CD8-positive, alpha-beta memory T cell (primary cell): ENCODE measurements at regions of chr20 and their contacts with region 1.

Region 1: GRCh38 chr20:41136680-41137613 is at the start of gene PLCG1:
- DNase-seq: peak; percentile 80 to 86 (median 83)
- H3K4me3 ChIP-seq: peak within 1 kb of the TSS; percentile 85
- H3K4me3 Mint-ChIP-seq: peak within 1 kb of the TSS; percentile 89 to 98 (median 94)
- H3K27ac ChIP-seq: peak within 1 kb of the TSS; percentile 80
- H3K27ac Mint-ChIP-seq: peak within 1 kb of the TSS; percentile 92 to 99 (median 96)
- H3K4me1 ChIP-seq: peaks cover 63% of the 10 kb centered on the region
- H3K4me1 Mint-ChIP-seq: peaks cover 57 to 66% (median 63%) of the 10 kb centered on the region in 3 donors
- H3K27me3 ChIP-seq: no peaks in the 10 kb centered on the region
- H3K27me3 Mint-ChIP-seq: peaks cover 0 to 4% of the 10 kb centered on the region in 2 donors
- total RNA-seq, gene PLCG1: 104 to 108 TPM

Region 2: GRCh38 chr20:41072190-41072863 is 64.6 kb before region 1 on chr20:
- CTCF ChIA-PET with region 1: no interaction called
- POLR2A ChIA-PET with region 1: no interaction called
- DNase-seq: no peak
- H3K4me3 ChIP-seq: no peak overlapping the region
- H3K4me3 Mint-ChIP-seq: peak overlapping the region in 1 of 7 donors; percentile 3
- H3K27ac ChIP-seq: no peak overlapping the region
- H3K27ac Mint-ChIP-seq: peak overlapping the region in 5 of 8 donors; percentile 20 to 87 (median 51)
- H3K4me1 ChIP-seq: peaks cover 67% of the 10 kb centered on the region
- H3K4me1 Mint-ChIP-seq: peaks cover 62 to 92% (median 89%) of the 10 kb centered on the region in 3 donors
- H3K27me3 ChIP-seq: no peaks in the 10 kb centered on the region
- H3K27me3 Mint-ChIP-seq: no peaks in the 10 kb centered on the region

Region 3: GRCh38 chr20:41149679-41150131 is 12.8 kb after region 1 on chr20:
- CTCF ChIA-PET with region 1: interaction called, 193 read pairs
- POLR2A ChIA-PET with region 1: interaction called, 69 read pairs
- DNase-seq: no peak
- H3K4me3 ChIP-seq: no peak overlapping the region
- H3K4me3 Mint-ChIP-seq: peak overlapping the region in 6 of 7 donors; percentile 1 to 94 (median 65)
- H3K27ac ChIP-seq: no peak overlapping the region
- H3K27ac Mint-ChIP-seq: peak overlapping the region; percentile 44 to 99 (median 92)
- H3K4me1 ChIP-seq: peaks cover 100% of the 10 kb centered on the region
- H3K4me1 Mint-ChIP-seq: peaks cover 92 to 99% (median 97%) of the 10 kb centered on the region in 3 donors
- H3K27me3 ChIP-seq: no peaks in the 10 kb centered on the region
- H3K27me3 Mint-ChIP-seq: peaks cover 0 to 1% of the 10 kb centered on the region in 2 donors

Region 4: GRCh38 chr20:41222296-41222695 is 85.3 kb after region 1 on chr20:
- CTCF ChIA-PET with region 1: interaction called, 14 read pairs
- POLR2A ChIA-PET with region 1: no interaction called
- DNase-seq: no peak
- H3K4me3 ChIP-seq: no peak overlapping the region
- H3K4me3 Mint-ChIP-seq: no peak overlapping the region
- H3K27ac ChIP-seq: no peak overlapping the region
- H3K27ac Mint-ChIP-seq: no peak overlapping the region
- H3K4me1 ChIP-seq: no peaks in the 10 kb centered on the region
- H3K4me1 Mint-ChIP-seq: no peaks in the 10 kb centered on the region
- H3K27me3 ChIP-seq: no peaks in the 10 kb centered on the region
- H3K27me3 Mint-ChIP-seq: no peaks in the 10 kb centered on the region

Region 5: DNA sequence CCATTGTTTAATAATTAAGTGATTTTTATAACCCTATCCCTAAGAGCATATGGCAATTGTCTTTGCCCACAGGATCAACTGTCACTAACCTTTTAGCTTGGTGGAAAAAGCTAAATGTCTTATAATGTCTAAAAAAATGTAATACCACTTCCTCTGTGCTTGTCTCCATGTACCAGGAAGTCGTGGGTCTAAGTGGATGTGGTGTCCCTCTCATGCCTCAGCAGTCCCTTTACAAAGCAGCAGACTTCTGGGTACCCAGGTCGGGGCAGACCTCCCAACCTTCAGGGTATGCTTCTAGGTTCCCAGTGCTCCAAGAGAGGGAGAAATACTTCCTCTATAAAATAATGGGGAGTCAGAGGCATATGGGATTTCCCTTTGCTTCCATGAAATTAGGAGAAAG is 105.9 kb after region 1 on chr20:
- CTCF ChIA-PET with region 1: interaction called, 16 read pairs
- POLR2A ChIA-PET with region 1: no interaction called
- DNase-seq: no peak
- H3K4me3 ChIP-seq: no peak overlapping the region
- H3K4me3 Mint-ChIP-seq: no peak overlapping the region
- H3K27ac ChIP-seq: no peak overlapping the region
- H3K27ac Mint-ChIP-seq: peak overlapping the region in 2 of 8 donors; percentile 14 to 25
- H3K4me1 ChIP-seq: peaks cover 10% of the 10 kb centered on the region
- H3K4me1 Mint-ChIP-seq: peaks cover 7 to 13% (median 12%) of the 10 kb centered on the region in 3 donors
- H3K27me3 ChIP-seq: no peaks in the 10 kb centered on the region
- H3K27me3 Mint-ChIP-seq: no peaks in the 10 kb centered on the region